ENCODE measurements at regions of chr5 and their contacts with region 1.

Region 1: GRCh38 chr5:39074016-39074886 is at the start of gene RICTOR:
- DNase-seq: peak; percentile 86 to 99 (median 89)

Region 2: GRCh38 chr5:38994324-38994927 is 79.8 kb before region 1 on chr5:
- intact Hi-C with region 1: loop called (anchors 5 kb)
- DNase-seq: peak in 1 of 10 donors; percentile 17